Activated CD4-positive, alpha-beta T cell treated with anti-CD3 and anti-CD28 coated beads for 36 hours (primary cell): ENCODE measurements at regions of chr10 and their contacts with region 1.

Region 1: GRCh38 chr10:8053446-8054290 is 820 bp upstream of the GATA3 start:
- DNase-seq: peak; percentile 98
- ATAC-seq: peak; percentile 67
- H3K4me3 Mint-ChIP-seq: peak overlapping the region; percentile 96
- H3K27ac Mint-ChIP-seq: peak overlapping the region; percentile 94
- H3K4me1 Mint-ChIP-seq: peaks cover 39% of the 10 kb centered on the region
- H3K27me3 Mint-ChIP-seq: peaks cover 18% of the 10 kb centered on the region

Region 2: DNA sequence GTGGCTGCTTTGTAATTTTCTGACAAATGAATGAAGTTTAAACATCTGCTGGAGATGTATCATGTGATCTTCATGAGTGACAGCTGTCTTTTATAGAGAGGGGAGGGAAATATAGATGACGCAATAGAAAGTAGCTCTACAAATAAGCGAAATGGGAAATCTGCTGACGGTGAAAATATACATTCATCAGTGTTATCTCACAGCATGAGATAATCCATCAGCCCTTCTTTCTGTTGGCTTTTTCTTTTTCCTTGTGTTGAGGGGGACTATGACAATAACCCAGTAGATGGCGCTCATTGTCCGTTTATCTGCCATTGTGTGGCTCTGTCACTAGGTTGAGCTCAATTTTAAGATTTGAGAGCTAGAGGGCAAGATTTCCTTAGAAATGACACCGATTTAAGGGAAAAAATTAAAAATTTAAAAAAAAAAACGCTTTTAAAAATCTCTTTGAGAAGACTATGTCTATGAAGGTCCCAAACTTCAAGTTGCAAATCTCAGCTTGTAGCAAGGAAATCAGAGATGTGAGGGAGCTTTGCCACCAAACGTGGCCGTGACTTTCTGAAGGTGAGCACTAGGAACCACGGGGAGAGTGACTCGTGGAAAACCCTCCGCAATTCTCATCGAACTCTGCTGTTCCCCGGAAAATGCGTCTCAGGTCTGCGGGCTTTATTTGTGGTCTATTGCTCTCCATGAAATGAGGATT is 528.2 kb before region 1 on chr10:
- CTCF ChIA-PET with region 1: no interaction called
- POLR2A ChIA-PET with region 1: no interaction called
- intact Hi-C with region 1: loop called in 1 of 2 experiments (anchors 10 kb)
- DNase-seq: peak; percentile 77
- ATAC-seq: peak; percentile 90
- H3K4me3 Mint-ChIP-seq: no peak overlapping the region
- H3K27ac Mint-ChIP-seq: no peak overlapping the region
- H3K4me1 Mint-ChIP-seq: peaks cover 18% of the 10 kb centered on the region
- H3K27me3 Mint-ChIP-seq: peaks cover 2% of the 10 kb centered on the region

Region 3: GRCh38 chr10:8035006-8035640 is 18.5 kb before region 1 on chr10:
- CTCF ChIA-PET with region 1: interaction called, 3 read pairs
- POLR2A ChIA-PET with region 1: no interaction called
- intact Hi-C with region 1: loop called in 1 of 2 experiments (anchors 1 kb)
- DNase-seq: no peak
- ATAC-seq: no peak
- H3K4me3 Mint-ChIP-seq: peak overlapping the region; percentile 26
- H3K27ac Mint-ChIP-seq: peak overlapping the region; percentile 9
- H3K4me1 Mint-ChIP-seq: peaks cover 26% of the 10 kb centered on the region
- H3K27me3 Mint-ChIP-seq: peaks cover 63% of the 10 kb centered on the region

Region 4: DNA sequence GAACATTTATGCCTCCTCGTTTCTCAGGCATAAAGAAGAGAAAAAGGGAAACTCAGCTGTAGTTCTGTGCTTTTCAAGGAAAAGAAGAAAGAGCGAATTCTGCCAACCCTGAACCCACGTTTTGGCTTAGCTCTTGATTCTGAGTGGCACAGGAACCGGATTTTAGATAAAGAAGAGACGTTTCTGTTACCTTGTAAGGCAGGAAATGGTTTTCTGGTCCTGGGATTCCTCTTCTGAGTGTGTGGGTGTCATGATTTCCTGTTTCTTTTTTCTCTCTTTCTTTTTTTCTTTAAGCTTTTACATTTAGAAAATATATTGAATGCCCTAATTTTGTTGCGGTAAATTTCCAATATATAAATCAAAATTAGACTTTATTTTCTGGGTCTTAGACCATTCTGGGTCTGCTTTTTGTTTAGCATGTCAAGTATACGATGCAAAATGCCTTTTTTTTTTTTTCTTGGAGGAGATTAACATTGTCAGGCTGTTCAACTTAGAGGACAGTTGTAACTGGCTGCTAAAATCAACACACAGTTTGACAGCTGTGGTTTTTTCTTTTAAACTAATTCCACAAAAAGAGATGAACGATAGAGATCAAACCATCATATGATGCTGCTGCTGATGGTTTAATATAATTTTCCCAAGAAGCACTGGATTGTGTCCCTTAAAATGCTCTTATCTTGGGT is 191.6 kb after region 1 on chr10:
- CTCF ChIA-PET with region 1: interaction called, 3 read pairs
- POLR2A ChIA-PET with region 1: no interaction called
- intact Hi-C with region 1: loop called (anchors 2 to 5 kb)
- DNase-seq: no peak
- ATAC-seq: no peak
- H3K4me3 Mint-ChIP-seq: peak overlapping the region; percentile 48
- H3K27ac Mint-ChIP-seq: peak overlapping the region; percentile 70
- H3K4me1 Mint-ChIP-seq: peaks cover 49% of the 10 kb centered on the region
- H3K27me3 Mint-ChIP-seq: no peaks in the 10 kb centered on the region

Region 5: GRCh38 chr10:8404391-8405120 is 350.9 kb after region 1 on chr10:
- CTCF ChIA-PET with region 1: no interaction called
- POLR2A ChIA-PET with region 1: no interaction called
- intact Hi-C with region 1: loop called in 1 of 2 experiments (anchors 2 kb)
- DNase-seq: peak; percentile 49
- ATAC-seq: peak; percentile 10
- H3K4me3 Mint-ChIP-seq: peak overlapping the region; percentile 55
- H3K27ac Mint-ChIP-seq: peak overlapping the region; percentile 73
- H3K4me1 Mint-ChIP-seq: peaks cover 69% of the 10 kb centered on the region
- H3K27me3 Mint-ChIP-seq: no peaks in the 10 kb centered on the region

Region 6: GRCh38 chr10:9091530-9092093 is 1037.9 kb after region 1 on chr10:
- CTCF ChIA-PET with region 1: no interaction called
- POLR2A ChIA-PET with region 1: no interaction called
- intact Hi-C with region 1: loop called (anchors 5 to 10 kb)
- DNase-seq: peak; percentile 57
- ATAC-seq: peak; percentile 97
- H3K4me3 Mint-ChIP-seq: peak overlapping the region; percentile 27
- H3K27ac Mint-ChIP-seq: peak overlapping the region; percentile 52
- H3K4me1 Mint-ChIP-seq: peaks cover 51% of the 10 kb centered on the region
- H3K27me3 Mint-ChIP-seq: peaks cover 3% of the 10 kb centered on the region

Region 7: GRCh38 chr10:9302120-9302746 is 1248.6 kb after region 1 on chr10:
- CTCF ChIA-PET with region 1: no interaction called
- POLR2A ChIA-PET with region 1: no interaction called
- intact Hi-C with region 1: loop called (anchors 5 to 10 kb)
- DNase-seq: peak; percentile 16
- ATAC-seq: no peak
- H3K4me3 Mint-ChIP-seq: no peak overlapping the region
- H3K27ac Mint-ChIP-seq: no peak overlapping the region
- H3K4me1 Mint-ChIP-seq: no peaks in the 10 kb centered on the region
- H3K27me3 Mint-ChIP-seq: peaks cover 15% of the 10 kb centered on the region